MCF 10A (cell line): ENCODE measurements at regions of chr14 and their contacts with region 1.

Region 1: GRCh38 chr14:78566026-78566858 is 396.1 kb downstream of the NRXN3 start:
- DNase-seq: peak; percentile 59
- H3K4me3 Mint-ChIP-seq: no peak overlapping the region
- H3K27ac Mint-ChIP-seq: no peak overlapping the region
- H3K4me1 Mint-ChIP-seq: no peaks in the 10 kb centered on the region
- H3K27me3 Mint-ChIP-seq: no peaks in the 10 kb centered on the region
- CTCF ChIP-seq: peak; percentile 71

Region 2: GRCh38 chr14:78022059-78022458 is 544.2 kb before region 1 on chr14:
- CTCF ChIA-PET with region 1: interaction called, 10 read pairs
- POLR2A ChIA-PET with region 1: no interaction called
- intact Hi-C with region 1: loop called (anchors 1 kb)
- DNase-seq: peak; percentile 80
- H3K4me3 Mint-ChIP-seq: no peak overlapping the region
- H3K27ac Mint-ChIP-seq: no peak overlapping the region
- H3K4me1 Mint-ChIP-seq: no peaks in the 10 kb centered on the region
- H3K27me3 Mint-ChIP-seq: peaks cover 9% of the 10 kb centered on the region
- CTCF ChIP-seq: peak; percentile 73

Region 3: GRCh38 chr14:78164238-78164853 is 401.9 kb before region 1 on chr14:
- CTCF ChIA-PET with region 1: interaction called, 4 read pairs
- POLR2A ChIA-PET with region 1: no interaction called
- intact Hi-C with region 1: loop called (anchors 1 kb)
- DNase-seq: peak; percentile 49
- H3K4me3 Mint-ChIP-seq: no peak overlapping the region
- H3K27ac Mint-ChIP-seq: no peak overlapping the region
- H3K4me1 Mint-ChIP-seq: no peaks in the 10 kb centered on the region
- H3K27me3 Mint-ChIP-seq: peaks cover 58% of the 10 kb centered on the region
- CTCF ChIP-seq: peak; percentile 57

Region 4: DNA sequence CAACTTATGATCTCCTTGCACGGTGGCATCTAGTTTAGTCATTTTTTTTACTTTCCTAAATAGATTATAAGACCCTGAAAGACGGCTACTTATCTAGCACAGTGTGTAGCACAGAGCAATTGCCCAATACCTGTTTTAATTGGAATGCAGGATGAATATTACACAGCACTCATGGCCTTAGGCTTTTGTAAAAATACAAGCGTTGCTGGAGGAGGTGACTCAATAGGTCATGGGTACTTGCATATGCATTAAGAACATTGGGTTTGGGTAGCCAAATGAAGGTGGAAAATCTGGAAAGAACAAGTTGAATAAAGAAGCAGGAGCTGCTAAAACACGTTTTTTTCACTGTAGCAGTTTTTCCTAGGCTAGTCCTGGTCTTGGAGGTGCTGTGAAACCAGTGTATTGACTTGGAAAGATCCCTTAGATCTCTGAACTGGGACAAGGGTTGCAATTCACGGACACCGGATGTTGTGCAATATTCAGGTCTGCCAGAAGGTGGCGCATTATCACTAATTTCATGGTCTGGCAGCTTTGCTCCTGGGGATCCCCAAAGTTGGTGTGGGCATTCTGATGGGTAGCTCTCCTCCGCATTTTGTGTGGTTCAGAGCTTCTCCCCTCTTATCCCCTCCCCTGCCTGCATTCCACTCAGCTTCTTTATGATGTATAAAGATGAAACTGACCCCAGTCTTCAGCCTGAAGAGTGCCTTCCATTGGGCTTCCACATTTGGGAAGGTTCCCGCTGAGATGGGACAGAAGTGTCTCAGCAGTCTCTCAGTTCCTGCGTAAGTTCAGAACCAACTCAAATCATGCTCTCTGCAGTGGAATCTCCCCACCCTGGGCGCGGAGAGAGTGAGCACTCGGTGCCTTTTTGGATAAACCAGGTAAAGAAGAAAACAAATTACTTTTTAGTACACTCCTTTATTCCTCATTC is 117.8 kb before region 1 on chr14:
- CTCF ChIA-PET with region 1: interaction called, 6 read pairs
- POLR2A ChIA-PET with region 1: no interaction called
- intact Hi-C with region 1: loop called (anchors 1 kb)
- DNase-seq: peak; percentile 49
- H3K4me3 Mint-ChIP-seq: no peak overlapping the region
- H3K27ac Mint-ChIP-seq: no peak overlapping the region
- H3K4me1 Mint-ChIP-seq: no peaks in the 10 kb centered on the region
- H3K27me3 Mint-ChIP-seq: no peaks in the 10 kb centered on the region
- CTCF ChIP-seq: peak; percentile 64

Region 5: DNA sequence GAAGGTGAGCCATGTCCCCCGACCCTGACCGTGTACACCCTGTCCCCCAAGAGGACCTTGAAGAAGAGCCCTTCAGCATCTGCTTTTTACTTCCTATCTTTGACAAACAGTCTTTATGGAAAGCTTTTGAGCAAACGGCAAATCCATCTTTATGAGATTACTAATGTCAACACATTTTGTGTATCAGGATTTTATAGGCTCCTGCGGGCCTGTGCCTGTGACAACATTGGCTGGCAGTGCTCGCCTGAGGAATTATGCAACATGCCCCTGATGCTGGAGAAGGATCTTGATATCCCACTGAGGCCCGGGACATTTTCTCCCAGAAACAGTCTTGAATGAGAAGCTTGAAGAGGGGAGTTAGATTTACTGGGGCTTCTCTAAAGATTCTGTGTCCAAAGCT is 20.4 kb after region 1 on chr14:
- CTCF ChIA-PET with region 1: interaction called, 35 read pairs
- POLR2A ChIA-PET with region 1: no interaction called
- intact Hi-C with region 1: no loop called
- DNase-seq: no peak
- H3K4me3 Mint-ChIP-seq: no peak overlapping the region
- H3K27ac Mint-ChIP-seq: no peak overlapping the region
- H3K4me1 Mint-ChIP-seq: no peaks in the 10 kb centered on the region
- H3K27me3 Mint-ChIP-seq: peaks cover 18% of the 10 kb centered on the region
- CTCF ChIP-seq: no peak

Region 6: DNA sequence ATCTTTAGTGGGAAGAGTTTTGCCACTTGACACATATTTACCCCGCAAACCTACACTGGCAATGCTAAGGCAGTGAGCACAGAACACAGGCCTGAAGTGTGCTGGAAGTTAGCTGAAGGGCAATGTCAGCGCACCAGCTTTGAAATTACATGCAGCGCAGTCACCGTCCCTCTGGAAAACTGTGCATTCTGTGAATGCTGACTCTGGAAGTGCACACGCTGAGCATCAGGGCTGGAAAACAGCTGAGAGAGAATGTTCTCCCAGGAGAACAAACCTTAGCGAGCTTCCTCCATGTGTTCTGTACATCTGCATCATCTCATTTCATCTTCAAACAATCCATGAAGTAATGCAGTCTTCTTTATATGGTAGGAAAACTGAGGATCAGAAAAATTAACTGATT is 52.1 kb after region 1 on chr14:
- CTCF ChIA-PET with region 1: interaction called, 10 read pairs
- POLR2A ChIA-PET with region 1: no interaction called
- intact Hi-C with region 1: no loop called
- DNase-seq: no peak
- H3K4me3 Mint-ChIP-seq: no peak overlapping the region
- H3K27ac Mint-ChIP-seq: no peak overlapping the region
- H3K4me1 Mint-ChIP-seq: no peaks in the 10 kb centered on the region
- H3K27me3 Mint-ChIP-seq: peaks cover 14% of the 10 kb centered on the region
- CTCF ChIP-seq: no peak

Region 7: GRCh38 chr14:78836777-78837176 is 270.5 kb after region 1 on chr14:
- CTCF ChIA-PET with region 1: interaction called, 6 read pairs
- POLR2A ChIA-PET with region 1: no interaction called
- intact Hi-C with region 1: loop called (anchors 1 kb)
- DNase-seq: peak; percentile 76
- H3K4me3 Mint-ChIP-seq: no peak overlapping the region
- H3K27ac Mint-ChIP-seq: no peak overlapping the region
- H3K4me1 Mint-ChIP-seq: no peaks in the 10 kb centered on the region
- H3K27me3 Mint-ChIP-seq: peaks cover 76% of the 10 kb centered on the region
- CTCF ChIP-seq: peak; percentile 66